GM13976 (cell line): ENCODE measurements at regions of chr11 and their contacts with region 1.

Region 1: GRCh38 chr11:86818466-86819192 is 18.3 kb downstream of the PRSS23 start:
- DNase-seq: peak; percentile 56
- CTCF ChIP-seq: peak; percentile 26

Region 2: DNA sequence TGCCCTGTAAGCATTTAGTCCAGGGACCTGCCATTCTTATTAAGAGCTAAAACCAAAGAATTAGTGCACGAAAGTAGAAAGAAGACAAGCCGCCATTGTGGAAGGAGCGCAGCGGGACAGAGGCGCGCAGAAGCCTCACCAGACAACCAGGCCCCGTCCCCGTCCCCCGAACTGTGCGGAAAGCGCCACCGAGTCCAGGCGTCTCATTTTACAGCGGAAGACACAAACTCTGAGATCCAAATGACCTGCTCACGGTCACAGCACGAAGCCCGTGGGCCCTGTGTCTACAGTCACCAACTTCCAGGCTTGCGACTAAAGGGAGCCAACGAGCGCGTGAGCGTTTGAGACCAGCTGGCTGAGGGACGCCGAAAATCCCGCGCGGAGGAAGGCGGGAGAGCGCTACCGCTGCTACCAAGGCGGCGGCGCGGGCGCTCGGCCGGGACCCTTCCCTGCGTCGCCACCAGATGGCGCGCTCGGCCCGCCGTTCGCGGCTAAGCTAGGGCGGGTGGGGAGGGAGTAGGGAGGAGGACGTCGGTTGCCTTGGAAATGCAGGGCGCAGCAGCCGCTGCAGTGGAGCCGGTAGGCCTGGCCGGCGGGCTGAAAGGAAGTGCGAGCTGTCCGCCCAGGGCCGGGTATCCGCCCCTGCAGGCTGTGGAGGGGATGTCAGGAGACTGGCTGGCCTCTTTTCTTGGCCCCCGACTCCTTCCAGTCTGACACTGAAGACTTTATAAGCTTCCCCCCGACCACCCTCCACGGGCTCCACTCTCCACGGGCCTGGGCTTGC is 963.9 kb before region 1 on chr11:
- in situ Hi-C with region 1: loop called (anchors 25 kb)
- DNase-seq: peak; percentile 95
- CTCF ChIP-seq: peak; percentile 94

Region 3: DNA sequence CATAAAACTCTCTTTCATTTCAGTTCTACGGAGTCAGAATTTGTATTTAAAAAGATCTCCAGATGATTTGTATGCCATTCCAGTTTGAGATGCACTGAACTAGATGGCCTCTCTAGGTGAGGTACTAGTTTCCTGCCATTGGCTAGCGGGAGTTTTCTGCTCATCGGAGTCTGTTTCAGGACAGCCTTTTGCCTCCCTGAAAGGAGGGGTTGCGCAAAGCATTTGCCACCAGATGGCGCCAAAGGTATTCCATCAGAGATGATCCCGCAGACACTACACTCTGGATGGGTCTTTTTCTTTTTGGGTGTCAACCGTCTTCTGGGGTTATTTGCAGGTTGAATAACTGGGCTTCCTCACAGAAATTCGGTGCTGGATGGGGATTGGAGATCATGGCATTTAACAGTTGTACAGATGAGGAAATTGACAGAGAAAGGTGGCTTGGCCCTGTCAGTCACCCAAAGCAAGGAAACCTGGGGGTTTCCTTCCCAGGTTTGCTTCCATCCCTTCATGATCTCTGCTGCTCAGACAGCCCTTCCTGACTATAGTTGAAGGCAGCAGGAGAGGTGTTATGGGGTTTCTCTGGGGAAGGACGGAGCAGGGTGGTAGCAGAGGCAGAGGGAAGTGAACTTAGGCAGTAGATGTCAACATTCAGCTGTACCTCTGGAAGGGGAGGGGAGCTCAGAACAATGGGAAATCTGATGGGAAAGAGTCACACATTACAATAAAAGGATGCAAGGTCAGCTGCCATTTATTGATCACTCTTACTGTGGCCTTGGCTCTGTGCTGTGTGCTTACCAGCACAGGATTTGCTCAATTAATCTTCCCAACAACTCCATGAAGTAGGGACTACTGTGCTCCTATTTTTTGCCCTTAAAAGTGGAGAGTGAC is 362.3 kb before region 1 on chr11:
- in situ Hi-C with region 1: loop called (anchors 5 kb)
- DNase-seq: peak; percentile 70
- CTCF ChIP-seq: peak; percentile 82

Region 4: DNA sequence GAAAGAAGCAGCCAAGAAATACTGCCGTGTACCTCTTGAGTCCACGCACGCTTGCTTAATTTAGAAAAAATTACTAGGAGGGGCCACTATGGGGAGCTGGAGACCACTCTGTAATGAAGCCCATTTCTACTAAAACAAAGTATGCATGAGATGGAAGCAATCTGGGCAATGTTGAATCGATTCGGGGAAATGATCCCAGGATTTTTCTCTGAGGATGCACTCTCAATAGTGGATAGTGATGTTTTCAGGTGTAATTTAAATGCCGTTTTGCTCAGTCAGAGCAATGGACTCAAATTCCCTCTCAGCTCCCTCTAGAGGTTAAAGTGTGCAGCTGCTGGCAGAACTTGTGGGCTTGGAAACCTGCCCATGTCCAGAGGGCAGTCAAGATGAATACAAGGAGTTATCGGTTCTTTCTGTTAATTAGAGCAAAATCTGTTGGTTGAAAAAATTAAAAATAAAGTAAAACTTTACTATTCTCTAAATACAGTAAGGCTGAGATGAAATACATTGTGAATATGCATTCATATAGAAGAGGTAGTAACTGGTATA is 210.3 kb before region 1 on chr11:
- in situ Hi-C with region 1: loop called (anchors 25 kb)
- DNase-seq: peak; percentile 47
- CTCF ChIP-seq: peak; percentile 85